ENCODE measurements at regions of chr10 and their contacts with region 1.

Region 1: GRCh38 chr10:25117757-25118156 is 57.0 kb upstream of the GPR158 start:
- DNase-seq: no peak
- H3K4me3 ChIP-seq: no peak overlapping the region
- H3K27ac ChIP-seq: no peak overlapping the region
- H3K4me1 ChIP-seq: peaks cover 3 to 10% (median 7%) of the 10 kb centered on the region in 4 donors
- H3K27me3 ChIP-seq: peaks cover 0 to 19% (median 0%) of the 10 kb centered on the region in 3 donors
- CTCF ChIP-seq: no peak
- EP300 ChIP-seq: no peak
- POLR2A ChIP-seq: no peak

Region 2: DNA sequence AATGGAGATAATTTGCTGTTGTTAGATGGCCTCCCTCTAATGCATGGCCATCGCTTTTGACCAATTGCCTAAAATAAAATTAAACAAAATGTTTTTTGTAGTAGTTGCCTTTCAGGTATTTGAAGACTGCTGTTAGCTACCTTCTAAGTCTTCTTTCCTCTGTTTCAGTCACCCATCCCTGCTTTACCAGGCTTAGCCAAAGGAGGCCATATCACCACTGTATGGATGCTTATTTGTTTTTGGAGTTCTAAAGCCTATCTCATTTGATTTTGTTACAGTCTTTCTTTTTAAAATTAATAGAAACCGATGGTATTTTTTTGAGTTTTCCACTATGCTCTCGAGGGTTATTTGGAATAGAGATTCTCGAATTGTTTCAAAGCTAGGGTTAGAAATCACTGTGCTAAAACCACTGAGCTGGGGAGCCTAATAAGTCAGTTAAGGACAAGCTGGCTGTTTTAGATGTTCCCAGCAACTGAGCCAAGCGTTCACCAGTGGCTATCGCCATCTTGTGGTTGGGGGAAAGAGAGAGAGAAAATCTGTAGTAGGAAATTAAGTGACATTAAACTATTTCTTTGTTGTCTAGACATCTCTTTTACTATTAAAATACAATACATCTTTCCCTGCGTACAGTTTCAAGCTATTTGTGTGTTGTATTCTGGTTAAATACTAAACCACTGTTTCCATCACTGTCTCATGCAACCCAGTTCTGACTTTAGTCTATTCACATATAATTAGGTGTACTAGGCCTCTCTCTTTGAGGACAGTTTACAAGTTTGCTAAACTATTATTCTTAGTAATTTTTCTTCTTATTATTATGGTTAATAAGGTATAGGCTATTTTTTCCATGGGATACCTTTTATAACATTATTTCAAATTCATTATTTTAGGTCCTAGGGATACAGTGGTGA is 109.3 kb after region 1 on chr10:
- intact Hi-C with region 1: loop called (anchors 5 kb)
- DNase-seq: peak; percentile 39 to 70
- H3K4me3 ChIP-seq: no peak overlapping the region
- H3K27ac ChIP-seq: no peak overlapping the region
- H3K4me1 ChIP-seq: no peaks in the 10 kb centered on the region
- H3K27me3 ChIP-seq: no peaks in the 10 kb centered on the region
- CTCF ChIP-seq: peak in 4 of 7 experiments; percentile 29 to 71 (median 49)
- EP300 ChIP-seq: no peak
- POLR2A ChIP-seq: no peak

Region 3: GRCh38 chr10:25261558-25261957 is 143.8 kb after region 1 on chr10:
- intact Hi-C with region 1: no loop called
- DNase-seq: peak in 1 of 2 donors; percentile 1
- H3K4me3 ChIP-seq: no peak overlapping the region
- H3K27ac ChIP-seq: no peak overlapping the region
- H3K4me1 ChIP-seq: no peaks in the 10 kb centered on the region
- H3K27me3 ChIP-seq: no peaks in the 10 kb centered on the region
- CTCF ChIP-seq: no peak
- EP300 ChIP-seq: no peak
- POLR2A ChIP-seq: no peak